Dendritic cell treated with granulocyte-macrophage colony-stimulating factor and Interleukin-4, amounts not matched to agents 40 ng/mL and 50 ng/mL, for 4 days (primary cell): ENCODE measurements at regions of chr19 and their contacts with region 1.

Region 1: GRCh38 chr19:51784922-51785690 is 9.9 kb upstream of the FPR3 start:
- H3K4me3 Mint-ChIP-seq: no peak overlapping the region
- H3K27ac Mint-ChIP-seq: no peak overlapping the region
- H3K4me1 Mint-ChIP-seq: peaks cover 60% of the 10 kb centered on the region
- H3K27me3 Mint-ChIP-seq: no peaks in the 10 kb centered on the region

Region 2: GRCh38 chr19:51799034-51799773 is 14.1 kb after region 1 on chr19:
- intact Hi-C with region 1: loop called (anchors 1 kb)
- H3K4me3 Mint-ChIP-seq: peak overlapping the region; percentile 96
- H3K27ac Mint-ChIP-seq: peak overlapping the region; percentile 95
- H3K4me1 Mint-ChIP-seq: peaks cover 67% of the 10 kb centered on the region
- H3K27me3 Mint-ChIP-seq: no peaks in the 10 kb centered on the region

Region 3: DNA sequence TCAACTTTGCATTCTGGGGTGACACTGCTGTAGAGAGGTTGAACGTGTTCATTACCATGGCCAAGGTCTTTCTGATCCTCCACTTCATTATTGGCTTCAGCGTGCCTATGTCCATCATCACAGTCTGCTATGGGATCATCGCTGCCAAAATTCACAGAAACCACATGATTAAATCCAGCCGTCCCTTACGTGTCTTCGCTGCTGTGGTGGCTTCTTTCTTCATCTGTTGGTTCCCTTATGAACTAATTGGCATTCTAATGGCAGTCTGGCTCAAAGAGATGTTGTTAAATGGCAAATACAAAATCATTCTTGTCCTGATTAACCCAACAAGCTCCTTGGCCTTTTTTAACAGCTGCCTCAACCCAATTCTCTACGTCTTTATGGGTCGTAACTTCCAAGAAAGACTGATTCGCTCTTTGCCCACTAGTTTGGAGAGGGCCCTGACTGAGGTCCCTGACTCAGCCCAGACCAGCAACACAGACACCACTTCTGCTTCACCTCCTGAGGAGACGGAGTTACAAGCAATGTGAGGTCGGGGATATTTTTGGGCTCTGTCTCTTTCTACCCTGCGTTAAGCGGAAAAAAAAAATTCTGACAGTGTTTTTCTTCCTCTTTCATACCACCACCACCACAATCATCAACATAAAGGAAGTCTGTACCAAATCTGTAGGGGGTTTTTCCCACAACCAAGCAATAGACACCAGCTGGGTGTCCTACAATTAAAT is 39.3 kb after region 1 on chr19:
- intact Hi-C with region 1: loop called (anchors 5 kb)
- H3K4me3 Mint-ChIP-seq: peak overlapping the region; percentile 43
- H3K27ac Mint-ChIP-seq: peak overlapping the region; percentile 82
- H3K4me1 Mint-ChIP-seq: peaks cover 98% of the 10 kb centered on the region
- H3K27me3 Mint-ChIP-seq: no peaks in the 10 kb centered on the region

Region 4: GRCh38 chr19:52095172-52096014 is 310.3 kb after region 1 on chr19 and contains the start of gene ZNF841:
- intact Hi-C with region 1: no loop called
- H3K4me3 Mint-ChIP-seq: peak within 1 kb of the TSS; percentile 88
- H3K27ac Mint-ChIP-seq: peak within 1 kb of the TSS; percentile 90
- H3K4me1 Mint-ChIP-seq: peaks cover 19% of the 10 kb centered on the region
- H3K27me3 Mint-ChIP-seq: no peaks in the 10 kb centered on the region